CD14-positive monocyte (primary cell): ENCODE measurements at regions of chr14 and their contacts with region 1.

Region 1: GRCh38 chr14:102555264-102555831 is 37.1 kb upstream of the RCOR1 start:
- DNase-seq: peak; percentile 46 to 48 (median 48)
- H3K4me3 ChIP-seq: peak overlapping the region; percentile 55 to 79 (median 59)
- H3K4me3 Mint-ChIP-seq: peak overlapping the region; percentile 77 to 80
- H3K27ac ChIP-seq: peak overlapping the region in 1 of 2 donors; percentile 74
- H3K27ac Mint-ChIP-seq: peak overlapping the region in 5 of 7 donors; percentile 26 to 79 (median 68)
- H3K4me1 ChIP-seq: peaks cover 9 to 32% of the 10 kb centered on the region in 2 donors
- H3K4me1 Mint-ChIP-seq: peaks cover 7% of the 10 kb centered on the region
- H3K27me3 ChIP-seq: no peaks in the 10 kb centered on the region
- H3K27me3 Mint-ChIP-seq: peaks cover 4 to 6% (median 4%) of the 10 kb centered on the region in 3 donors
- CTCF ChIP-seq: no peak

Region 2: GRCh38 chr14:102591889-102592763 is 36.8 kb after region 1 on chr14 and contains the start of gene RCOR1:
- intact Hi-C with region 1: loop called (anchors 5 kb)
- DNase-seq: peak; percentile 94 to 98 (median 97)
- H3K4me3 ChIP-seq: peak within 1 kb of the TSS; percentile 86 to 99 (median 97)
- H3K4me3 Mint-ChIP-seq: peak within 1 kb of the TSS; percentile 99
- H3K27ac ChIP-seq: peak within 1 kb of the TSS; percentile 89 to 94
- H3K27ac Mint-ChIP-seq: peak within 1 kb of the TSS; percentile 94 to 99 (median 97)
- H3K4me1 ChIP-seq: peaks cover 16 to 26% of the 10 kb centered on the region in 2 donors
- H3K4me1 Mint-ChIP-seq: peaks cover 32% of the 10 kb centered on the region
- H3K27me3 ChIP-seq: no peaks in the 10 kb centered on the region
- H3K27me3 Mint-ChIP-seq: peaks cover 1 to 9% (median 7%) of the 10 kb centered on the region in 3 donors
- CTCF ChIP-seq: no peak
- polyA plus RNA-seq, gene RCOR1: 2.1 to 36.6 (median 2.3) TPM